Activated T-helper 2 cell treated with anti-CD3 and anti-CD28 coated beads, Interferon-gamma antibody, Interleukin-2, Interleukin-4, amounts not matched to agents 10 μg/mL and 5 μg/mL and 100 μg/mL, durations not matched to agents 14 hours and 24 hours and 36 hours (primary cell): ENCODE measurements at regions of chr7 and their contacts with region 1.

Region 1: DNA sequence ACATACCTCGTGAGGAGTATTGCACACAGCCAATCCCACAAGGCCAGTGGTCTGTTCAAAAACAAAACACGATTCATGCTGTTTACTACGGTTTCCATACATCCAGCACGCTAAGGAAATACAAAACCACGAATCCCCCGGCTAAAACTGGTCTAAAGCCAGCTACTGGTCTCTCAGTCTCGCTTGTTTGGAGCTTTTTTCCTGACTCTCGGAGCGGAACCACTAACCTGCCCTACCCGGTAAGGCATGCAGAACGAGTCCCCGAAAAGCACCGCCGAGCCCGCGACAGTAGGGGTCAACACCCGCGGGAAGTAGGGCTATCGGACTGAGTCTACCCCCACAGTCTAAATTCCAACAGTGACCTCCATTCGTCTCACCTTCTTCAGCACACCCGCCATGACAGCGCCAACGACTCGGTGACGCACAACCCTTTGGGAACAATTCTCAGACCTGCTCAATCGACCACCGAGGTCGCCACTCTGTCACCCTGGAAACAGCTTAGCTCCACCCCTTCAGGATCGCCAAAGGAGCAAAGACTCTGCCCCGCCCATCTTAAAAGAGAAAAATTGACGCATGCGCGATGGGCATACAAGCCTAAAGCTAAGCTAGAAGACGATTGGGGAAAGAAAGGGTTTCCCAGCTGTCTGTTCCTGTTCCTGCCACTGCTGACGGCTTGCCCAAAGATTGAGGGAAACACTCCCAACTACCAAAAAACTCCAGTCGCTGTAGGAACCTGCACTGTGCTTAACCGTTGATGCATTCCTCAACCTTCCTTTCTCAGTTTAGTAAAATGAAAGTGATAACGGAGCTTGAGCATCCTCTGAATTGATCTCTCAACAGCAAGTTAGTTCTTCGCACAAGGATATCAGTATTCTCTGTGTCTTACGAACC is at the start of gene NDUFA5:
- DNase-seq: peak; percentile 95
- H3K4me3 Mint-ChIP-seq: no peak within 1 kb of the TSS
- H3K27ac Mint-ChIP-seq: no peak within 1 kb of the TSS
- H3K4me1 Mint-ChIP-seq: peaks cover 4% of the 10 kb centered on the region
- H3K27me3 Mint-ChIP-seq: peaks cover 2% of the 10 kb centered on the region
- total RNA-seq, gene NDUFA5: 55.1 and 57.2 TPM in 2 replicates

Region 2: DNA sequence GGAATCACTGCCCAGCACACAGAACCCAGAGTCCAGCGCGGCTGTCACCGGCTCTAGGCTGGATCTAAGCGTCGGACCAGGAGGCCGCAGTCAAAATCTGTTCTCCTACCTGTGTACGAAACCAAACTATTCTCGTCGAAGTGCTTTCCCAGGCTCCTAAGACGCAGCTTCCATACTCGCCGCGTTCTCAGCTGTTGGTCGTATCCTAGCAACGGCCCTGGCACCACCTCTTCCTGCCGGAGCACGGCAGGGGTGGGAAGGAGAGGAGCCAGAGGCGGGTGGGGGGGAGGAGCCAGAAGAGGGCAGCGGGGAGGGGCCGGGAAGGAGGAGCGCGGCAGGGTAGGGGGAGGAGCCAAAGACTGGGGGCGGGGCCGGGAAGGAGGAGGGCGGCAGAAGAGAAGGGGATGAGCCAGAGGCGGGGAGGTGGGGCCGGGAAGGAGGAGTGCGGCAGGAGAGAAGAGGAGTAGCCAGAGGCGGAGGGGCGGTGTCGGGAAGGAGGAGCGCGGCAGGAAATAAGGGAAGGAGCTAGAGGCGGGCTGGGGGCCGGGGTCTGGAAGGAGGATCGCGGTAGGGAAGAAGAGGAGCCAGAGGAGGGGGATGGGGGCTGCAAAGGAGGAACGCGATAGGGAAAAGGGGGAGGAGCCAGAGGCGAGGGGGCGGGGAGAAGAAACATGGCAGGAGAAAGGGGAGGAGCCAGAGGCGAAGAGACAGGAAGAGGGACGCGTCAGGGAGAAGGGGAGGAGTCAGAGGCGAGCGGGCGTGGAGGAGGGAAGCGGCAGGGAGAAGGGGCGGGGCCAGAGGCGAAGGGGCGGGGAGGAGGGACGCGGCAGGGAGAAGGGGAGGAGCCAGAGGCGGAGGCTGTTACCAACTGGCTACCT is 23.0 kb before region 1 on chr7 and contains the start of gene IQUB:
- intact Hi-C with region 1: loop called (anchors 1 kb)
- DNase-seq: peak; percentile 88
- H3K4me3 Mint-ChIP-seq: peak within 1 kb of the TSS; percentile 88
- H3K27ac Mint-ChIP-seq: peak within 1 kb of the TSS; percentile 84
- H3K4me1 Mint-ChIP-seq: peaks cover 23% of the 10 kb centered on the region
- H3K27me3 Mint-ChIP-seq: peaks cover 17% of the 10 kb centered on the region
- total RNA-seq, gene IQUB: 0.25 TPM in 1 of 2 replicates, not detected in the other

Region 3: GRCh38 chr7:123594813-123595241 is 37.2 kb after region 1 on chr7:
- intact Hi-C with region 1: no loop called
- DNase-seq: no peak
- H3K4me3 Mint-ChIP-seq: no peak overlapping the region
- H3K27ac Mint-ChIP-seq: no peak overlapping the region
- H3K4me1 Mint-ChIP-seq: no peaks in the 10 kb centered on the region
- H3K27me3 Mint-ChIP-seq: no peaks in the 10 kb centered on the region

Region 4: GRCh38 chr7:123712619-123713018 is 155.0 kb after region 1 on chr7:
- intact Hi-C with region 1: loop called (anchors 5 kb)
- DNase-seq: no peak
- H3K4me3 Mint-ChIP-seq: no peak overlapping the region
- H3K27ac Mint-ChIP-seq: no peak overlapping the region
- H3K4me1 Mint-ChIP-seq: peaks cover 51% of the 10 kb centered on the region
- H3K27me3 Mint-ChIP-seq: no peaks in the 10 kb centered on the region

Region 5: DNA sequence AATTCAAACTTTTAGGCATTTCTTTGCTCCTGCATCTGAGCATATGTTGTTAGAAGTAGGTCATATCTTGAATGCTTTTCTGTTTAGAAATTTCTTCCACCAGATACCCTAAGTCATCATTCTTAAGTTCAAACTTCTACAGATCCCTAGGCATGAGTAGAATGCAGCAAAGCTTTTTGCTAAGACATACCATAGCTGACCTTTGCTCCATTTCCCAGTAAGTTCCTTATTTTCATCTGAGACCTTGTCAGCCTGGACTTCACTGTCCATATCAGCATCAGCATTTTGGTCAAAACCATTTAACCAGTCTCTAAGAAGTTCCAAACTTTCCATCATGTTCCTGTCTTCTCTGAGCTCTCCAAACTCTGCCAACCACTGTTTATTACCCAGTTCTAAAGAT is 346.5 kb after region 1 on chr7:
- intact Hi-C with region 1: no loop called
- DNase-seq: no peak
- H3K4me3 Mint-ChIP-seq: no peak overlapping the region
- H3K27ac Mint-ChIP-seq: no peak overlapping the region
- H3K4me1 Mint-ChIP-seq: no peaks in the 10 kb centered on the region
- H3K27me3 Mint-ChIP-seq: no peaks in the 10 kb centered on the region

Region 6: DNA sequence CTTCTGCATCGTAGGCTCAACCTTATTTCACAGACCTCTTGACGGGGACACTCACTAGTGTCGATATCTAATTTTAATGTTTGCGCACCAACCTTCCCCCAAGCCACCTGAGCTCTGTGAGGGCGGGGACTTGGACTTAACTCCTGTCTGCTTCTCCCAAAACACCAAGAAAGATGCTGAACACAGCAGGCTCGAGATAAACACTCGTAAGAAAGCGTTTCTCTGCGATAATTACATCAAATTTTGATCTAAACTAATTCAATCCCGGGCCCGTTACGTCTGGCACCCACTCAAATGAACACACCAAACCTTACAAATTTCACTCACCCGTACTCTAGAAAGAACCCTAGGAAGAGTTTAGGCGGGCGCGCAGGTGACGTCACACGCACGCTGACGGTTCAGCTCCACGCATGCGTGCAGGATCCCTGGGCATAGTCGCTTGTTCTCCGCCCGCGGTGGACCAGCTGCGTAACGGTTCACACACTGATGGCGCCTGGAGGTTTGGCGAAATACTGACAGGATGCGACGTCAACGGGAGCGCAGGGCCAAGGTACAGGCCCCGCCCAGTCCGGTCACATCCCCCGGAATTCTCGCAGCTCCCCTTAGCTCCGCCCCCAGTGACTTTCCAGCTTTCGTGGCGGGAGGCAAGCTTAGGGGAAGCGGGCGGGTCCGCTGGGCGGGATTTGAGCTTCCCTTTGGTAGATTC is 1372.0 kb after region 1 on chr7 and contains the start of gene POT1:
- intact Hi-C with region 1: loop called (anchors 10 kb)
- DNase-seq: peak; percentile 95
- H3K4me3 Mint-ChIP-seq: peak within 1 kb of the TSS; percentile 95
- H3K27ac Mint-ChIP-seq: peak within 1 kb of the TSS; percentile 95
- H3K4me1 Mint-ChIP-seq: peaks cover 33% of the 10 kb centered on the region
- H3K27me3 Mint-ChIP-seq: peaks cover 9% of the 10 kb centered on the region
- total RNA-seq, gene POT1: 25.6 and 29.7 TPM in 2 replicates